CD8-positive, alpha-beta memory T cell (primary cell): ENCODE measurements at regions of chr7 and their contacts with region 1.

Region 1: GRCh38 chr7:37181550-37181932 is 267.1 kb downstream of the ELMO1 start:
- DNase-seq: no peak
- H3K4me3 ChIP-seq: no peak overlapping the region
- H3K4me3 Mint-ChIP-seq: no peak overlapping the region
- H3K27ac ChIP-seq: no peak overlapping the region
- H3K27ac Mint-ChIP-seq: no peak overlapping the region
- H3K4me1 ChIP-seq: no peaks in the 10 kb centered on the region
- H3K4me1 Mint-ChIP-seq: peaks cover 5 to 15% (median 9%) of the 10 kb centered on the region in 3 donors
- H3K27me3 ChIP-seq: no peaks in the 10 kb centered on the region
- H3K27me3 Mint-ChIP-seq: no peaks in the 10 kb centered on the region

Region 2: DNA sequence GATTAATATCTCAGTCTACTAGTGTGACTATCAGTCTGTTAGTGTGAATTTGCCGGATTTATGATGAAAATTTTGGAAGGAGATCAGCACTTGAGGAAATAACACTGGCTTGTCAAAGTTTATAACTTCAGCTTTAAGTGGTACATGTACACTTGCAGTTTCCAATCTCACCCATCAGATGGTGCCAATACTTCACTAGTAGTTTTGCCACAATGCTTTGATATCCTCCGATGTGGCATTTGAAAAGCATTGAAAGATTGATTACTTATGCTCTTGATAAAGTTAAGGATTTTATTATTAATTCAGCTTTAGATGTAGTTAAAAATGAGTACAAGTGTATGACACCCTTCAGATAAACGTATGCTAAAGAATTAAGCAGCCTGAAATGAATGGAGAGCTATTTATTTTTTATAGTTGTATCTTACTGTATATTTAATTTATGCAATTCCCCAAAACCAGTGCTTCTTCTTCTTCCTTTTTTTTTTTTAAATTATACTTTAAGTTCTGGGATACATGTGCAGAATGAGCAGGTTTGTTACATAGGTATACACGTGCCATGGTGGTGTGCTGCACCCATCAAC is 693.7 kb before region 1 on chr7:
- CTCF ChIA-PET with region 1: interaction called, 55 read pairs
- POLR2A ChIA-PET with region 1: no interaction called
- DNase-seq: peak in 3 of 5 donors; percentile 16 to 59 (median 53)
- H3K4me3 ChIP-seq: no peak overlapping the region
- H3K4me3 Mint-ChIP-seq: no peak overlapping the region
- H3K27ac ChIP-seq: no peak overlapping the region
- H3K27ac Mint-ChIP-seq: no peak overlapping the region
- H3K4me1 ChIP-seq: no peaks in the 10 kb centered on the region
- H3K4me1 Mint-ChIP-seq: peaks cover 0 to 4% (median 2%) of the 10 kb centered on the region in 3 donors
- H3K27me3 ChIP-seq: no peaks in the 10 kb centered on the region
- H3K27me3 Mint-ChIP-seq: peaks cover 0 to 3% of the 10 kb centered on the region in 2 donors

Region 3: GRCh38 chr7:36670585-36671431 is 510.7 kb before region 1 on chr7:
- CTCF ChIA-PET with region 1: interaction called, 20 read pairs
- POLR2A ChIA-PET with region 1: no interaction called
- DNase-seq: peak; percentile 47 to 71 (median 65)
- H3K4me3 ChIP-seq: no peak overlapping the region
- H3K4me3 Mint-ChIP-seq: peak overlapping the region in 3 of 7 donors; percentile 30 to 56 (median 50)
- H3K27ac ChIP-seq: no peak overlapping the region
- H3K27ac Mint-ChIP-seq: peak overlapping the region in 7 of 8 donors; percentile 60 to 91 (median 87)
- H3K4me1 ChIP-seq: no peaks in the 10 kb centered on the region
- H3K4me1 Mint-ChIP-seq: peaks cover 31 to 64% (median 52%) of the 10 kb centered on the region in 3 donors
- H3K27me3 ChIP-seq: no peaks in the 10 kb centered on the region
- H3K27me3 Mint-ChIP-seq: peaks cover 0 to 2% of the 10 kb centered on the region in 2 donors

Region 4: GRCh38 chr7:36686499-36686898 is 495.0 kb before region 1 on chr7:
- CTCF ChIA-PET with region 1: interaction called, 24 read pairs
- POLR2A ChIA-PET with region 1: interaction called, 12 read pairs
- DNase-seq: peak in 2 of 5 donors; percentile 26 to 59
- H3K4me3 ChIP-seq: no peak overlapping the region
- H3K4me3 Mint-ChIP-seq: peak overlapping the region in 6 of 7 donors; percentile 56 to 80 (median 70)
- H3K27ac ChIP-seq: no peak overlapping the region
- H3K27ac Mint-ChIP-seq: peak overlapping the region; percentile 18 to 98 (median 92)
- H3K4me1 ChIP-seq: peaks cover 27% of the 10 kb centered on the region
- H3K4me1 Mint-ChIP-seq: peaks cover 56 to 81% (median 79%) of the 10 kb centered on the region in 3 donors
- H3K27me3 ChIP-seq: no peaks in the 10 kb centered on the region
- H3K27me3 Mint-ChIP-seq: no peaks in the 10 kb centered on the region

Region 5: GRCh38 chr7:37193087-37193774 is 11.7 kb after region 1 on chr7:
- CTCF ChIA-PET with region 1: interaction called, 22 read pairs
- POLR2A ChIA-PET with region 1: no interaction called
- DNase-seq: no peak
- H3K4me3 ChIP-seq: no peak overlapping the region
- H3K4me3 Mint-ChIP-seq: no peak overlapping the region
- H3K27ac ChIP-seq: no peak overlapping the region
- H3K27ac Mint-ChIP-seq: peak overlapping the region in 2 of 8 donors; percentile 17 to 32
- H3K4me1 ChIP-seq: no peaks in the 10 kb centered on the region
- H3K4me1 Mint-ChIP-seq: peaks cover 7 to 14% (median 10%) of the 10 kb centered on the region in 3 donors
- H3K27me3 ChIP-seq: no peaks in the 10 kb centered on the region
- H3K27me3 Mint-ChIP-seq: no peaks in the 10 kb centered on the region

Region 6: GRCh38 chr7:37201003-37201875 is 19.7 kb after region 1 on chr7:
- CTCF ChIA-PET with region 1: interaction called, 22 read pairs
- POLR2A ChIA-PET with region 1: no interaction called
- DNase-seq: peak; percentile 13 to 54 (median 18)
- H3K4me3 ChIP-seq: no peak overlapping the region
- H3K4me3 Mint-ChIP-seq: no peak overlapping the region
- H3K27ac ChIP-seq: no peak overlapping the region
- H3K27ac Mint-ChIP-seq: peak overlapping the region in 5 of 8 donors; percentile 6 to 93 (median 30)
- H3K4me1 ChIP-seq: no peaks in the 10 kb centered on the region
- H3K4me1 Mint-ChIP-seq: peaks cover 5 to 10% (median 7%) of the 10 kb centered on the region in 3 donors
- H3K27me3 ChIP-seq: no peaks in the 10 kb centered on the region
- H3K27me3 Mint-ChIP-seq: no peaks in the 10 kb centered on the region

Region 7: DNA sequence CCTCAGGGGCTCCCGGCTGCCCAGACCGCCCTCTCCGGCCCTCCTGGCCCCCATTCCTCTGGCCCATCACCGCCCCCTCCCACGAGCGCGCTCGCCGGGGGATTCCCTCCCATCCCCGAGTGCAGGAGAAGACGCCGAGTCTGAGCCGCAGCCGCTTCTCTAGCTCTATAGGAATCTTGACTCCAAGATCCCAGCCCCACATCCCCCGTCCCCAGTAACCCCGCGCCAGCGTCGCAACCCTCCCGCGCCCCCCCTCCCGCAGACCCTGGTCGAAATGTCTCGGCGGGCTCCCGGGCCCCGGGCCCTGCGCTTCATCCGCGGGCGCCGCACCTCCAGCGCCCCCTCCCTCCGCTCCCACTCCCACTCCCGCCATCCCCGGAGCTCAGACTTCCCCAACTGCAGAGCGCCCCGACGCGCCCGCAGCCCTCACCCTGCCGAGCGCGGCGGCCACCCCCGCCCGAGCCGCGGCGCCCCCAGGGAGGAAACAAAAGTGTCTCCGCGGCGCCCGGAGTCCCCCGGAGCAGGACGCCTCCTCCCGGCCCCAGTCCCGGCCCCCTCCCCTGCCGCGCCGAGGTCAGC is 266.6 kb after region 1 on chr7:
- CTCF ChIA-PET with region 1: no interaction called
- POLR2A ChIA-PET with region 1: no interaction called
- DNase-seq: peak in 2 of 5 donors; percentile 4 to 11
- H3K4me3 ChIP-seq: peak overlapping the region; percentile 65
- H3K4me3 Mint-ChIP-seq: peak overlapping the region; percentile 92 to 99 (median 98)
- H3K27ac ChIP-seq: peak overlapping the region; percentile 80
- H3K27ac Mint-ChIP-seq: peak overlapping the region; percentile 96 to 100 (median 98)
- H3K4me1 ChIP-seq: peaks cover 31% of the 10 kb centered on the region
- H3K4me1 Mint-ChIP-seq: peaks cover 52 to 65% (median 55%) of the 10 kb centered on the region in 3 donors
- H3K27me3 ChIP-seq: no peaks in the 10 kb centered on the region
- H3K27me3 Mint-ChIP-seq: peaks cover 0 to 6% of the 10 kb centered on the region in 2 donors